Activated naive CD8-positive, alpha-beta T cell treated with anti-CD3 and anti-CD28 coated beads, Interleukin-2, amount 10 ng/mL, durations not matched to agents 7 days and 5 days (primary cell): ENCODE measurements at regions of chr3 and their contacts with region 1.

Region 1: DNA sequence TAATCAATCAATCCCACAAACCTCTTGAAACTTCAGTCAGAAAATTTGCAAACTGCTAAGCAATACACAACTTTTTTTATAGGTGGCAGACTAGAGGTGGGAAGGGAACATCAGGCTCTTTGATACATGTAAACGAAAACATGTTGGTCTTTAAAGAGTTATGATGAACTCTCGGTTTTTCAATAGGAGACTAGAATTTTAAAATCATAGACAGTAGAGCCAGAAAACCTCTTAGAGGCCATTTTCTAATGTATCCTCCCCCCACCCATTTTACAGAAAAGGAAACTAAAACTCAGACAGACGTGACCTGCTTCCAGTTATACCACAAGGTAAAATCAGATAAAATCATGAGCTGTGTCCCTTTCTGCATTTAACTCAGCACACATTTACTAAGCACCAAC is 179.1 kb upstream of the LPP start:
- DNase-seq: no peak
- ATAC-seq: peak; percentile 65
- H3K4me3 Mint-ChIP-seq: peak overlapping the region; percentile 76
- H3K27ac Mint-ChIP-seq: peak overlapping the region; percentile 94
- H3K4me1 Mint-ChIP-seq: peaks cover 62% of the 10 kb centered on the region
- H3K27me3 Mint-ChIP-seq: no peaks in the 10 kb centered on the region

Region 2: DNA sequence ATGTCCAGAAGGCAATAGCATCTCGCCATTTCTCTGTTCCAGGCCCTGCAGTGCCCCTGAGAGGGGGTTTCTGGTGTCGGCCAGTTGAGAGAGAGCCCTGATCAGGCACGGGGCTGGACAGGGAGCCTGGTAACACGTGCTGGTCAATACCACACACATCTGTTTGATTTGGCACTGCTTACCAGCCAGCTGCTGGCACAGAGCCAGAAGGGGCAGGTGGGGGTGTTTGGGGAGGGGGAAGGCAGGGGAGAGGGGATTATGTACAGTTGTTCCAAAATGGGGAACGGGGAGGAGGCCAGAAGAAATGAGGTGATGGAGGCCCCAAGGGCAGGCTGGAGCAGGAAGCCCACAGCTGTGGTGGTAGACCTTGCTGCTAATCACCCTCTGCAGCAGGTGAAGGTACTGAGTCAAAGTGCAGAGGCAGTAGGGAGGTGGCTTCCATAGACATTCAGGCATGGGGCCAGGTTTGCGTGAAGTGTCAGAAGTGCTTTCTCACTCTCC is 25.5 kb after region 1 on chr3:
- POLR2A ChIA-PET with region 1: interaction called, 17 read pairs
- DNase-seq: peak; percentile 59
- ATAC-seq: peak; percentile 53
- H3K4me3 Mint-ChIP-seq: peak overlapping the region; percentile 77
- H3K27ac Mint-ChIP-seq: peak overlapping the region; percentile 94
- H3K4me1 Mint-ChIP-seq: peaks cover 64% of the 10 kb centered on the region
- H3K27me3 Mint-ChIP-seq: no peaks in the 10 kb centered on the region